ENCODE measurements at regions of chr4 and their contacts with region 1.

Region 1: DNA sequence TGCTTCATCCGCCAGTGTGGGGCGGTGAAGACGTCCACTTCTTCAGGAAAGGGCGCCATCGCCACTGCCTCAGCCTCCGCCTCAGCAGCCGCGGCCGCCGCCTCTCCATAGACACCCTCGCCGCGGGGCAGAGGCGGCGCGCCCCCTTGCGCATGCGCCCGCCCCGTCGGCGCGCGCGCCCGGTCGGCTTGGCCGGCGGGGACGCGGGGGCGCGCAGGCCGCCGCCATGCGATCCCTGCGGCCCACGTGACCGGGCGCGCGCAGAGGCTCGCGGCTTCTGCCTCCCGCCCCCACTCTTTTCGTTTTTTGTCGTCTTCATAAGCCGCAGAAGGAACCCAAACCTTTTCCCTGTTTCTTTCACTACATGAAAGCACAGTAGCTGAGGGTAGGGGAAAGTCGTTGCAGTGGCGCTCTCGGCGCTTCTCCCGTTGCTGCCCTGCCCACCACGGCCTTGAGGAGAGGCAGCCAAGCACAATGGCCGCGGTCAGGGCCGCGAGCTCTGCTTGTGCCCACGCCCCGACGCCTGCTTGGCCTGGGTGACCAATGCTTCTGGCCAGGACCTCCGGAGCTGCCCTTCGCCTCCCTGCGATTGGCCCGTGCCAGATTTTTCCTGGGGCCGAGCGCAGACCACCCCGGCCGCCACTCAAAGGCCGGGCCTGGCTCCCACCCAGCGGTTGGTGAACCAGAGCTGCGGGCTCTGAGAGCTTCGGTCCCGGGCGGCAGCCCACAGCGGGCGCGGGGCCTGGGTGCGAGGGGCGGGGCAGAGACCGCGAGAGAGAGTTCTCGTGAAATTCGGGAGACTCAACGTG is at the start of gene FBXL5:
- DNase-seq: peak; percentile 94
- ATAC-seq: peak; percentile 80
- H3K4me3 ChIP-seq: peak within 1 kb of the TSS; percentile 74 to 87 (median 85)
- H3K4me3 Mint-ChIP-seq: peak within 1 kb of the TSS; percentile 97
- H3K27ac ChIP-seq: peak within 1 kb of the TSS; percentile 88 to 97
- H3K27ac Mint-ChIP-seq: peak within 1 kb of the TSS; percentile 99
- H3K4me1 ChIP-seq: peaks cover 29 to 39% of the 10 kb centered on the region in 2 donors
- H3K4me1 Mint-ChIP-seq: peaks cover 42% of the 10 kb centered on the region
- H3K27me3 ChIP-seq: no peaks in the 10 kb centered on the region
- H3K27me3 Mint-ChIP-seq: no peaks in the 10 kb centered on the region
- CTCF ChIP-seq: no peak
- total RNA-seq, gene FBXL5: 41.0 and 41.9 TPM in 2 replicates

Region 2: GRCh38 chr4:15238720-15239119 is 416.7 kb before region 1 on chr4:
- CTCF ChIA-PET with region 1: no interaction called
- POLR2A ChIA-PET with region 1: no interaction called
- intact Hi-C with region 1: loop called (anchors 2 kb)
- DNase-seq: peak; percentile 45
- ATAC-seq: no peak
- H3K4me3 ChIP-seq: no peak overlapping the region
- H3K4me3 Mint-ChIP-seq: no peak overlapping the region
- H3K27ac ChIP-seq: no peak overlapping the region
- H3K27ac Mint-ChIP-seq: no peak overlapping the region
- H3K4me1 ChIP-seq: peaks cover 3 to 5% of the 10 kb centered on the region in 2 donors
- H3K4me1 Mint-ChIP-seq: peaks cover 10% of the 10 kb centered on the region
- H3K27me3 ChIP-seq: no peaks in the 10 kb centered on the region
- H3K27me3 Mint-ChIP-seq: peaks cover 3% of the 10 kb centered on the region
- CTCF ChIP-seq: peak; percentile 45

Region 3: GRCh38 chr4:15410750-15411149 is 244.7 kb before region 1 on chr4:
- CTCF ChIA-PET with region 1: no interaction called
- POLR2A ChIA-PET with region 1: no interaction called
- intact Hi-C with region 1: loop called (anchors 10 kb)
- DNase-seq: peak; percentile 57
- ATAC-seq: peak; percentile 63
- H3K4me3 ChIP-seq: peak overlapping the region in 4 of 5 experiments; percentile 34 to 42 (median 39)
- H3K4me3 Mint-ChIP-seq: peak overlapping the region; percentile 81
- H3K27ac ChIP-seq: peak overlapping the region; percentile 61 to 63
- H3K27ac Mint-ChIP-seq: peak overlapping the region; percentile 81
- H3K4me1 ChIP-seq: peaks cover 62 to 63% of the 10 kb centered on the region in 2 donors
- H3K4me1 Mint-ChIP-seq: peaks cover 69% of the 10 kb centered on the region
- H3K27me3 ChIP-seq: no peaks in the 10 kb centered on the region
- H3K27me3 Mint-ChIP-seq: no peaks in the 10 kb centered on the region
- CTCF ChIP-seq: no peak

Region 4: DNA sequence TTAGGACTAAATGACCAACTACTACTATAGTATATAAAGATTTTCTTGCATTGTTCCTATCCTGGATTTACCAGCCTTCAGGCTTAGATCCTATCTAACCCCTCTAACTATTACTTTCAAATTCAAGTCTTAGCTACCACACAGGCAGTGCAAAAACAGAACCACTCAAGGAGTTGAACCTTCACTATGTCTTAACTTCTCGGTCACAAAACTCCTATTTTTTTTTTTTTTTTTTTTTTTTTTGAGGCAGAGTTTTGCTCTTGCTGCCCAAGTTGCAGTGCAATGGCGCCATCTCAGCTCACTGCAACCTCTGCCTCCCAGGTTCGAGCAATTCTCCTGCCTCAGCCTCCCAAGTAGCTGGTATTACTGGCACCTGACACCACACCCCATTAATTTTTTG is 19.9 kb after region 1 on chr4:
- CTCF ChIA-PET with region 1: interaction called, 4 read pairs
- POLR2A ChIA-PET with region 1: interaction called, 15 read pairs
- intact Hi-C with region 1: no loop called
- DNase-seq: no peak
- ATAC-seq: no peak
- H3K4me3 ChIP-seq: no peak overlapping the region
- H3K4me3 Mint-ChIP-seq: peak overlapping the region; percentile 32
- H3K27ac ChIP-seq: no peak overlapping the region
- H3K27ac Mint-ChIP-seq: no peak overlapping the region
- H3K4me1 ChIP-seq: peaks cover 12 to 17% of the 10 kb centered on the region in 2 donors
- H3K4me1 Mint-ChIP-seq: peaks cover 27% of the 10 kb centered on the region
- H3K27me3 ChIP-seq: no peaks in the 10 kb centered on the region
- H3K27me3 Mint-ChIP-seq: no peaks in the 10 kb centered on the region
- CTCF ChIP-seq: no peak

Region 5: DNA sequence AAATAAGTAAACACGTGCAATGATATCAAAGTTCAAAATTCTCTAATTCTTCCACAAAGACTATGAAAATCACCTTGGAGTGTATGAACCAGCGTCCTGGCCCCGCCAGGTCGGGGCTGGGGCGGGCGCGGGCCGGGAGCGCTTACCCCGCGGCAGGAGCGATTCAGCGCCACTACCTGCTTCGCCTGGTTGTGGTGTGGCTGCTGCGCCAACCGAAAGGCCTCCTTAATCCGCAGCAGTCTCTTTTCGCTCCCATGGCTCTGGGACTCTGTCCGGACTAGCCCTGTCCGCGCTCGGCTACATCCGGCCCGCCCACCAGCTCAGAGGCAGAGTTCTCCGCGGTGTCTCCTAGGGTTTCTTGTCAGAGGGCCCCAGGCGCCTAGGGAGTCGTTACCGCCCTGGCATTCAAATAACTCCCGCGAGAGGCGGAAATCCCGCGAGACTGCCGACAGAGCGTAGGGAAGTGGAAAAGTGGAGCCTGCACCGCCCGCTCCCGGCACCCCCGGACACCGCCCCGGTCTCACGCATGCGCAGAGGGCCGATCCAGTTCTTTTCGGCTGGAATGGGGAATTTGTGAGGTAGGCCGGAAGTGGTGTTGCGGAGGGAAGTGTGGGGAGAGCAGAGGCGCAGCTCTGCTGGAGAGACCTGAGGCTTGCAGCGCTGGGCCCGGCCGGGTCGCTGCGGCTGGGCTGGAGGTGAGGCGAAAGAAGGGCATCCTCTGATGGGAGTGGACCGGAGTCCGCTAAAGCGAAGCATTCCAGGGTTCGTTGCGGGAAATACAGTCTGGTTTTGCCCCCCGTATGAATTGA is 26.0 kb after region 1 on chr4 and contains the start of gene FAM200B:
- CTCF ChIA-PET with region 1: interaction called, 9 read pairs
- POLR2A ChIA-PET with region 1: interaction called, 8 read pairs
- intact Hi-C with region 1: loop called (anchors 1 kb)
- DNase-seq: peak; percentile 96
- ATAC-seq: peak; percentile 98
- H3K4me3 ChIP-seq: peak within 1 kb of the TSS; percentile 83 to 99 (median 89)
- H3K4me3 Mint-ChIP-seq: peak within 1 kb of the TSS; percentile 95
- H3K27ac ChIP-seq: peak within 1 kb of the TSS; percentile 68 to 80
- H3K27ac Mint-ChIP-seq: peak within 1 kb of the TSS; percentile 89
- H3K4me1 ChIP-seq: peaks cover 8 to 16% of the 10 kb centered on the region in 2 donors
- H3K4me1 Mint-ChIP-seq: peaks cover 22% of the 10 kb centered on the region
- H3K27me3 ChIP-seq: no peaks in the 10 kb centered on the region
- H3K27me3 Mint-ChIP-seq: no peaks in the 10 kb centered on the region
- CTCF ChIP-seq: no peak
- total RNA-seq, gene FAM200B: 11.0 and 12.1 TPM in 2 replicates

Region 6: DNA sequence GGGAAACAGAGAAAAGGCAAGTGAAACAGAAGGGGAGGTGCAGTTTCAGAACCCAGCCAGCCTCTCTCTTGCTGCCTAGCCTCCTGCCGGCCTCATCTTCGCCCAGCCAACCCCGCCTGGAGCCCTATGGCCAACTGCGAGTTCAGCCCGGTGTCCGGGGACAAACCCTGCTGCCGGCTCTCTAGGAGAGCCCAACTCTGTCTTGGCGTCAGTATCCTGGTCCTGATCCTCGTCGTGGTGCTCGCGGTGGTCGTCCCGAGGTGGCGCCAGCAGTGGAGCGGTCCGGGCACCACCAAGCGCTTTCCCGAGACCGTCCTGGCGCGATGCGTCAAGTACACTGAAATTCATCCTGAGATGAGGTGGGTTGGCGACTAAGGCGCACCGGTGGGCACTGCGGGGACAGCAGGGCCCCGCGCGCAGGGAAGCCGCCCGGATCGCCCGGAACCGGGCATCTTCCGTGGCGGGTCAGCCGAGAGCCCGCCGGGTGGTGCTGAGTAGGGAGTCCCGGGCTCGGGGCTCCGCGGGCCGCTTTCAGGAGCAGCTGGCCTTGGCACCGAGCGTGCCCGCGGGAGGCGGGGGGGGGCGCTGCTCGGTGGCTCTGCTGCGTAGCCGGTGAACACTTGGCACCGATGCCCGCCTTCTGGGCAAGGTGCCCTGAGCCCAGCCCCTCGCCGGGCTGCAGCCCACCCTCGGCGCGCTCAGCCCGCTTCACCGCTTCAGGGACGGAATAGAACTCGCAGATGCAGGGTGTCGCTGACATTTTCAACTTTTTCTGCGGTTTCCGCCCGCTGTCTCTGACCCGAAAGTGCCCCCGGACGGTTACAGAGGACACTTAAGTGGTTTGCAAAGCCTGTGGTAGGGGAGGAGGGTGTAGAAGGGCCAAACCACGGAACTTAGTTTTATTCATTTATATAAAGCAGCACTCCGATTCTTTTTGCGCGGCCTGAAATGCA is 123.1 kb after region 1 on chr4 and contains the start of gene CD38:
- CTCF ChIA-PET with region 1: no interaction called
- POLR2A ChIA-PET with region 1: no interaction called
- intact Hi-C with region 1: loop called (anchors 10 kb)
- DNase-seq: peak; percentile 67
- ATAC-seq: peak; percentile 68
- H3K4me3 ChIP-seq: peak within 1 kb of the TSS; percentile 55 to 76 (median 73)
- H3K4me3 Mint-ChIP-seq: peak within 1 kb of the TSS; percentile 88
- H3K27ac ChIP-seq: peak within 1 kb of the TSS; percentile 13 to 44
- H3K27ac Mint-ChIP-seq: peak within 1 kb of the TSS; percentile 28
- H3K4me1 ChIP-seq: peaks cover 51 to 53% of the 10 kb centered on the region in 2 donors
- H3K4me1 Mint-ChIP-seq: peaks cover 56% of the 10 kb centered on the region
- H3K27me3 ChIP-seq: no peaks in the 10 kb centered on the region
- H3K27me3 Mint-ChIP-seq: peaks cover 5% of the 10 kb centered on the region
- CTCF ChIP-seq: no peak
- total RNA-seq, gene CD38: 7.8 and 10.1 TPM in 2 replicates

Region 7: DNA sequence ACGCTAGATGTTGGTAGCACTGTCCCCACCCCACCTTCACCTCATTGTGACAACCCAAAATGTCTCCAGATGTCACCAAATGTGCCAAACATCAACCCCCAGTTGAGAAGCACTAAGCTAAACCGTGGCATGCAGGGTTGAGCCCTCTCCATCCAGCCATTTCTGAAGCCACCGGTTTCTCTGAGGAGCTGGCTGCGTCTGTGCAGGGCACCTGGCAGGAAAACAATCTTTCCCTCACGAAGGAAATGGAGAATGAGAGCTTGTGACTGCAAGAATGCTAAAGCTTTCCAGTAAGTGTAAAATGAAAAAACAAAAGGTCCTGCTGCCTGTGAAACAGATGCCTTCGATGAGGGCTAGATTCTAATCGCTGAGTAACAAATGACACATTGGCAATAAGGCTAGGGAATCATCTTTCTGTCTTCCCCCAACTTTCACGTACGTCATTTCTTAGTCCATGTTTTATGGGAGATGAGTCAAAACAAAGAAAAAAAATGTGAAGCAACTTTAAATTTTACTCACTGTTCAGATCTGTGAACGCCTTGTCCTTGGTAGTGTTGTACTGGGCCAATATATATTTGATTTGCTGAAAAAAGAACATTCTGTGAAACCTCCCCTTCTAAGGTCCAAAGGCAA is 368.5 kb after region 1 on chr4:
- CTCF ChIA-PET with region 1: no interaction called
- POLR2A ChIA-PET with region 1: no interaction called
- intact Hi-C with region 1: no loop called
- DNase-seq: no peak
- ATAC-seq: no peak
- H3K4me3 ChIP-seq: no peak overlapping the region
- H3K4me3 Mint-ChIP-seq: no peak overlapping the region
- H3K27ac ChIP-seq: no peak overlapping the region
- H3K27ac Mint-ChIP-seq: no peak overlapping the region
- H3K4me1 ChIP-seq: no peaks in the 10 kb centered on the region
- H3K4me1 Mint-ChIP-seq: no peaks in the 10 kb centered on the region
- H3K27me3 ChIP-seq: peaks cover 0 to 6% (median 0%) of the 10 kb centered on the region in 4 experiments
- H3K27me3 Mint-ChIP-seq: peaks cover 22% of the 10 kb centered on the region
- CTCF ChIP-seq: no peak

Region 8: GRCh38 chr4:16225863-16226815 is 570.7 kb after region 1 on chr4 and contains the start of gene TAPT1:
- CTCF ChIA-PET with region 1: no interaction called
- POLR2A ChIA-PET with region 1: no interaction called
- intact Hi-C with region 1: loop called (anchors 10 kb)
- DNase-seq: peak; percentile 88
- ATAC-seq: peak; percentile 80
- H3K4me3 ChIP-seq: peak within 1 kb of the TSS; percentile 77 to 95 (median 87)
- H3K4me3 Mint-ChIP-seq: peak within 1 kb of the TSS; percentile 99
- H3K27ac ChIP-seq: peak within 1 kb of the TSS; percentile 69 to 92
- H3K27ac Mint-ChIP-seq: peak within 1 kb of the TSS; percentile 99
- H3K4me1 ChIP-seq: peaks cover 33 to 54% of the 10 kb centered on the region in 2 donors
- H3K4me1 Mint-ChIP-seq: peaks cover 66% of the 10 kb centered on the region
- H3K27me3 ChIP-seq: no peaks in the 10 kb centered on the region
- H3K27me3 Mint-ChIP-seq: no peaks in the 10 kb centered on the region
- CTCF ChIP-seq: no peak
- total RNA-seq, gene TAPT1: 76.0 and 88.5 TPM in 2 replicates